ENCODE measurements at regions of chr1 and their contacts with region 1.

Region 1: DNA sequence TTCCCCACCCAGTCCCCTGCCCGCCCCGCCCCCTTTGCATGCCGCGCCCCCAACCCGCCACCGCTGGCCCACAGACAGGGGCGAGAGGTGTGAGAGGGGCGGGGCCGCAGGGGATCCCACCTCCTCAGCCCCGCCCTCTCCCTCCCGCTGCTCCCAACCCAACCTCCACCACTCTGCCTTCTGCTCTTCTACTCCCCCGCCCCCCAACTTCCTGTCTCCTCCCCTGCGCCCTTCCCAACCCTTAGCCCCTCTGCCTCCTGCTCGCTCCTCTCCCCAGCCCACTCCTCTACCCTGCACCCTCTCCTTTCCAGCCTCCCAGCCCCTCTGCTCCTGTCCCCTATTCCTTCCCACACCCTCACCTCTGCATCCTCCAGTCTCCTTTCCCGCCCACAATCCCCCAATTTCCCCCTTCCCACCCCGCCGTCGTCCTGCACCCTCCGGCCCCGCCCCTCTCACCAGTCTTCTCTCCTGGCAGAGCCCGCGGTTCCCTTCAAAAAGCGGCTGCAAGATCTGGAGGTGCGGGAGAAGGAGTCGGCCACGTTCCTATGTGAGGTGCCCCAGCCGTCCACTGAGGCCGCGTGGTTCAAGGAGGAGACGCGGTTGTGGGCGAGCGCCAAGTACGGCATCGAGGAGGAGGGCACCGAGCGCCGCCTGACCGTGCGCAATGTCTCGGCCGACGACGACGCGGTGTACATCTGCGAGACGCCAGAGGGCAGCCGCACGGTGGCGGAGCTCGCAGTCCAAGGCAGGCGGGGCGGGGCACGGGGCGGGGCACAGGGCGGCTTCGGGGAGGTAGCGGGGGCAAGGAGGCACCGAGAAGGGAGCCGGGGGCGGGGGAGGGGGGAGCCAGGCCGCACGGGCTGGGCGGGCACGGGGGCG is 5.4 kb downstream of the OBSCN start:
- DNase-seq: peak; percentile 76
- ATAC-seq: peak; percentile 97
- H3K4me3 Mint-ChIP-seq: peak overlapping the region; percentile 89
- H3K27ac Mint-ChIP-seq: peak overlapping the region; percentile 30
- H3K4me1 Mint-ChIP-seq: peaks cover 2% of the 10 kb centered on the region
- H3K27me3 Mint-ChIP-seq: no peaks in the 10 kb centered on the region
- CTCF ChIP-seq: no peak

Region 2: GRCh38 chr1:227416156-227416830 is 796.9 kb before region 1 on chr1:
- CTCF ChIA-PET with region 1: no interaction called
- POLR2A ChIA-PET with region 1: no interaction called
- intact Hi-C with region 1: no loop called
- DNase-seq: no peak
- ATAC-seq: no peak
- H3K4me3 Mint-ChIP-seq: no peak overlapping the region
- H3K27ac Mint-ChIP-seq: no peak overlapping the region
- H3K4me1 Mint-ChIP-seq: no peaks in the 10 kb centered on the region
- H3K27me3 Mint-ChIP-seq: no peaks in the 10 kb centered on the region
- CTCF ChIP-seq: no peak

Region 3: GRCh38 chr1:228082135-228082891 is 130.9 kb before region 1 on chr1 and contains the start of gene ARF1:
- CTCF ChIA-PET with region 1: no interaction called
- POLR2A ChIA-PET with region 1: no interaction called
- intact Hi-C with region 1: loop called (anchors 1 kb)
- DNase-seq: peak; percentile 97
- ATAC-seq: peak; percentile 90
- H3K4me3 Mint-ChIP-seq: peak within 1 kb of the TSS; percentile 93
- H3K27ac Mint-ChIP-seq: peak within 1 kb of the TSS; percentile 88
- H3K4me1 Mint-ChIP-seq: peaks cover 45% of the 10 kb centered on the region
- H3K27me3 Mint-ChIP-seq: no peaks in the 10 kb centered on the region
- CTCF ChIP-seq: no peak
- total RNA-seq, gene ARF1: 209 and 213 TPM in 2 replicates

Region 4: GRCh38 chr1:228131766-228132165 is 81.4 kb before region 1 on chr1:
- CTCF ChIA-PET with region 1: no interaction called
- POLR2A ChIA-PET with region 1: no interaction called
- intact Hi-C with region 1: loop called (anchors 1 kb)
- DNase-seq: no peak
- ATAC-seq: no peak
- H3K4me3 Mint-ChIP-seq: no peak overlapping the region
- H3K27ac Mint-ChIP-seq: no peak overlapping the region
- H3K4me1 Mint-ChIP-seq: peaks cover 9% of the 10 kb centered on the region
- H3K27me3 Mint-ChIP-seq: peaks cover 2% of the 10 kb centered on the region
- CTCF ChIP-seq: no peak

Region 5: DNA sequence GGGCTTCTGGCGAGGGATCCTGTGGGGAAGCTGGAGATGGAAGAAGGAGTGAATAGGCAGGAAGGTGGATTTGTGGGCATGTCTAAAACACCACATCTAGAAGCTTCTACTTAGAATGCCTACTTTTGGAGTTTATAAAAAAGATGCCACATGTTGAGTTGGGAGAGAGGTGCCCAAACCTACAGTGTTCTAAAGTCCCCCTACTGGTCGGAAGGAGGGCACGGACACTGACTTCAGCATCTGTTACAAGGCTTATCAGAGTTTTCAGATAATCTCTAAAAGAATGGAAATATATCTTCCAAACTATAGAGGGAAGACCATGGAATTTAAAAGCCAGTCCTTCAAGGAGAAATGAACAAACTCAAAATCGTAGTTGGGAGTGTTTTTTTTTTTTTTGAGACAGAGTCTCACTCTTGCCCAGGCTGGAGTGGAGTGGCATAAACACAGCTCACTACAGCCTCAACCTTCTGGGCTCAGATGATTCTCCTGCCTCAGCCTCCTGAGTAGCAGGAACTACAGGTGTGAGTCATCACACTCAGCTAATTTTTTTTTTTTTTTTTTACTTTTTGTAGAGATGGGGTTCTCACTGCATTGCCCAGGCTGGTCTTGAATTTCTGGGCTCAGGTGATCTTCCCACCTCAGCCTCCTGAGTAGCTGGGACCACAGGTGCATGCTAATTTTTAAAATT is 32.8 kb before region 1 on chr1:
- CTCF ChIA-PET with region 1: no interaction called
- POLR2A ChIA-PET with region 1: no interaction called
- intact Hi-C with region 1: no loop called
- DNase-seq: no peak
- ATAC-seq: peak; percentile 40
- H3K4me3 Mint-ChIP-seq: no peak overlapping the region
- H3K27ac Mint-ChIP-seq: no peak overlapping the region
- H3K4me1 Mint-ChIP-seq: peaks cover 3% of the 10 kb centered on the region
- H3K27me3 Mint-ChIP-seq: no peaks in the 10 kb centered on the region
- CTCF ChIP-seq: no peak

Region 6: DNA sequence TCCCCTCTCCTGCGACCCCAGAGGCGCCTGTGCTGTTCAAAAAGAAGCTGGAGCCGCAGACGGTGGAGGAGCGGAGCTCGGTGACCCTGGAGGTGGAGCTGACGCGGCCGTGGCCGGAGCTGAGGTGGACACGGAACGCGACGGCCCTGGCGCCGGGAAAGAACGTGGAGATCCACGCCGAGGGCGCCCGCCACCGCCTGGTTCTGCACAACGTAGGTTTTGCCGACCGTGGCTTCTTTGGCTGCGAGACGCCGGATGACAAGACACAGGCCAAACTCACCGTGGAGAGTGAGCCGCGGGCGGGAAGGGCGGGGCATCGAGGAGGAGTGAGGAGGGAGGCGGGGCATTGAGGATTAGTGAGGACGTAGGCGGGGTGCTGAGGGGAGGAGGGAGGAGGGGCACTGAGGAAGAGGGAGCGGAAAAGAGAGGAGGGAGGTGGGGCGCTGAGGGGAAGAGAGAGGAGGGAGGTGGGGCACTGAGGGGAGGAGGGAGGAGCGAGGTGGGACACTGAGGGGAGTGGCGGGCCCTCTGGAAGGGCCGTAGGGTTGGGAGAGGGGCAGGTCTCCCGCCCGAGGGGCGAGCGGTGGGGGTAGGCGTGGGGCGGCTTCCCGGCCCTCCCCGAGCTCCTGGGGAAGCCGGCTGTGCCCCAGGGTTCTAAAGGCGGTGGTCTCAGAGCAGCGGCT is 62.7 kb after region 1 on chr1:
- CTCF ChIA-PET with region 1: no interaction called
- POLR2A ChIA-PET with region 1: no interaction called
- intact Hi-C with region 1: loop called (anchors 1 kb)
- DNase-seq: peak; percentile 66
- ATAC-seq: peak; percentile 98
- H3K4me3 Mint-ChIP-seq: peak overlapping the region; percentile 82
- H3K27ac Mint-ChIP-seq: no peak overlapping the region
- H3K4me1 Mint-ChIP-seq: peaks cover 8% of the 10 kb centered on the region
- H3K27me3 Mint-ChIP-seq: no peaks in the 10 kb centered on the region
- CTCF ChIP-seq: no peak

Region 7: GRCh38 chr1:228486596-228487335 is 273.6 kb after region 1 on chr1:
- CTCF ChIA-PET with region 1: no interaction called
- POLR2A ChIA-PET with region 1: interaction called, 4 read pairs
- intact Hi-C with region 1: loop called (anchors 10 kb)
- DNase-seq: peak; percentile 65
- ATAC-seq: peak; percentile 64
- H3K4me3 Mint-ChIP-seq: peak overlapping the region; percentile 94
- H3K27ac Mint-ChIP-seq: peak overlapping the region; percentile 100
- H3K4me1 Mint-ChIP-seq: peaks cover 38% of the 10 kb centered on the region
- H3K27me3 Mint-ChIP-seq: no peaks in the 10 kb centered on the region
- CTCF ChIP-seq: no peak

Region 8: GRCh38 chr1:228515200-228515834 is 302.1 kb after region 1 on chr1:
- CTCF ChIA-PET with region 1: no interaction called
- POLR2A ChIA-PET with region 1: no interaction called
- intact Hi-C with region 1: loop called (anchors 1 kb)
- DNase-seq: no peak
- ATAC-seq: peak; percentile 45
- H3K4me3 Mint-ChIP-seq: no peak overlapping the region
- H3K27ac Mint-ChIP-seq: no peak overlapping the region
- H3K4me1 Mint-ChIP-seq: no peaks in the 10 kb centered on the region
- H3K27me3 Mint-ChIP-seq: peaks cover 18% of the 10 kb centered on the region
- CTCF ChIP-seq: no peak

Measured in activated B cell treated with CpG ODN at 0.5 μM for 24 hours (primary cell).